Dendritic cell treated with granulocyte-macrophage colony-stimulating factor and Interleukin-4, amounts not matched to agents 40 ng/mL and 50 ng/mL, for 4 days (primary cell): ENCODE measurements at regions of chr2 and their contacts with region 1.

Region 1: DNA sequence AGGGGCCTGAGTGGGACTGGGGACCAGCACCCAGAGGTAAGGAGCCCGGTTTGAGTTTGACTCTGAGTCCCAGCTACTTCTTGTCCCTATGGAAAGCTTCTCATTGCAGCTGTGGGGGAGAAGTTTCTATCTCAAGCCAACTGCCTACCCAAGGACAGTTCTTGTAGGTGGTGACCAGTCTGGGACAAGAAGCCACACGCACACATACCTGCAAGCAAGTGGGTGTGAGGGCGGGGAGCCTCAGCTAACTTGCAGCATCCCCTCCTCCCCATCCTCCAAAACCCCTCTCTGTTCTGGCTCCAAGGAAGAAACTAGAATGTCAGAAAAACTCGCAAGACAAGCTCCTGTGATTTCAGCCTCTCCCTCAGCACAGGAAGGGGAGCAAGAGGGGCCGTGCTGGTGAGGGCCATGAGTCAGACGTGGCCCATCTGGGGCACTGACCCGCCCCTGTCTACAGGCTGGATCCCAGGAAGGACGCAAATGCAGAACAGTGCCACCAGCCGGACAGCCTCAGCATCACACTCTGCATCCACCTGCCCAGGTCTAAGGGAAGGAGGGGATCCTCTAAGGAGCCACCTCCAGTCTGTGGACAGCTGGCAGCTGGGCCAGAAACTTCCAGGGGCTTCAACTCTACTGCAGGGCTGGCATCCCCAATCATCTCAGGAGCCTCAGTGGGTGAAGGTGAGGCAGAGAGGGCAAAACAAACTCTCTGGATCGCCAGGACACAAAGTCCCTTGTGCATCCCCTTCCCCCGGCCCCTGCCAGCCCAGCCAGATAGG is 103.4 kb downstream of the TNS1 start:
- H3K4me3 Mint-ChIP-seq: no peak overlapping the region
- H3K27ac Mint-ChIP-seq: peak overlapping the region; percentile 38
- H3K4me1 Mint-ChIP-seq: peaks cover 62% of the 10 kb centered on the region
- H3K27me3 Mint-ChIP-seq: peaks cover 7% of the 10 kb centered on the region

Region 2: GRCh38 chr2:217816396-217816869 is 83.0 kb before region 1 on chr2:
- intact Hi-C with region 1: no loop called
- H3K4me3 Mint-ChIP-seq: no peak overlapping the region
- H3K27ac Mint-ChIP-seq: peak overlapping the region; percentile 41
- H3K4me1 Mint-ChIP-seq: peaks cover 33% of the 10 kb centered on the region
- H3K27me3 Mint-ChIP-seq: no peaks in the 10 kb centered on the region

Region 3: DNA sequence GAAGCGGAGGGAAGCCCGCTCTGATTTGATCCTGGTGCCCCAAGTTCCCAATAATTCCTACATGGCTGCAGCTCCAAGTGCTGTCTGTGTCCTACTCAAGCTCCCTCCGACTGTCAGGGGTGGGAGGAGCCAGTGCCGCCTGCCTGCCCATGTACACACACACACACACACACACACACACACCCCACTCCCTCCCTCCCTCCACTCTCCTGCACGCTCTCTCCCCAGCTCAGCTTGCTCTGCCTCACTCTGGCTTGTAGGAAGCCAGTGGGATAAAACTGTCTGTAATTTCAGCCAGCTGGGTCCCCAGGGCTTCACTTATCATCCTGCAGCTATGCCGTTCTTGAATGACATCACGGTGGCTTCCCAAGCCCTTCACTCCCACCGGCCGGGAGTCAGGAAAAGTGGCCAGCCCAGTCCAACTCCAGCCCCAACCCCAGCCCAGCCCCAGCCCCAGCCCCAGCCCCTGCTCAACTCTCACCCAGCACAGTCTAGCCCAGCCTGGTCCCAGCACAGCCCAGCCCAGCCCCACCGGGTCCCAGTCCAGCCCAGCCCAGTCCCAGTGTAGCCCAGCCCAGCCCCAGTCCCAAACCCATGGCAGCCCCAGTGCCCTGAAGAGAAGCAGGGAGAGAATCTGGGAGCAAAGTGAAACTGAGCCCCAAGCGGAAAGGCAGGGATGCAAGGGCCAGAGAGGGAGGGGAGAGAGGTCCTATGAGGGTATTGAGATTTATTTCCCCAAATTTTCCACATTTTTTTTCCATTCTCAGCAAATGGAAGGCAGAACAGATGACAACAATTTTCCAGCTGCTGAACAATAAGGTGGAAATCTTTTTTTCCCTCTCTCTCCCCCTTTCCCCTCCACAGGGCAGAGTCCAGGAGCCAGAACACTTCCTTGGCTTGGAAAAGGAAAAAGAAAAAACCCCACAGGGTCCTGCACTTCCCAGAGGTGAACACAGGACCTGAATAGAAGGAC is 40.6 kb before region 1 on chr2:
- intact Hi-C with region 1: no loop called
- H3K4me3 Mint-ChIP-seq: no peak overlapping the region
- H3K27ac Mint-ChIP-seq: no peak overlapping the region
- H3K4me1 Mint-ChIP-seq: peaks cover 18% of the 10 kb centered on the region
- H3K27me3 Mint-ChIP-seq: peaks cover 41% of the 10 kb centered on the region

Region 4: DNA sequence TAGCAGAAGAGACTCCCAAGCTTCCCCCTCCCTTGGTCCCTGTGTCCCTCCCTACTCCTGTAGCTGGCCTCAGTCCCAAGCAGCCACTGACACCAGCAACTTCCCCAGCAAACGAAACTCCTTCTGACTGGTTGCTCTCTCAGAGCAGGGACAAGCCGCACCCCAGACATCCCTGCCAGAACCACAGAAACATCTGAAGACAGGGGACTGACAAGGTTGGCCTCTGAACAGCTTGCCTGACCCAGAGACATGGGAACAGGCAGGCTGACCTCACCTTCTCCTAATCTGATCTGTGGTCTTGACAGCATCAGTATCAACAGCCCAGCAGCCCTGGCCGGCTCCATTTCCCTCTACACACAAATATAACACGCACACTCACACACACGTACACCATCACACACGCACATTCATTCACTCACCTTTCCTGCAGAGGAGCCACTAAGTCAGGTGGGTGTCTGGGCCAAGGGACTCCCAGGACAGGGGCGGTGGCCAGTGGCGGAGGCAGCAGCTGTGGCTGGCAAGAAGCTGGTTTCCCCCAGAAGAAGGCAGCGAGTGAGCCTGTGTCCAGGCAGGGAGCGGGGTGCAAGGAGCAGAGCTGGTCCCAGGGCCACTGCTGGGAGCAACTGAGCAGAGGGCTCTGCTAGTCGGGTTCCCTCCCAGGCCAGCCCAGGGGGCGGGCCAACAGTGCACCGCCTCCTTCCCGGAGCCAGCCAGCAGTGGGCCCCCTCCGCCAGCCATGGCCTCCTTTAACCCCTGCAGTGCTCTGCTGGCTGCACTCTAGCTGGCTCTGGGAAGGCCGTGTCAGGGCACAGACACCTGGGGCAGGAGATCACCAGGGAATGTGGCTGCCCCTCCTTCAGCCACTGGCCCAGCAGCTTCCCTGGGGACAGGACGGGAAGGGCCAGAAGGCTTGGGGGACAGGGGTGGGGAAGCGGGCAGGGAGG is 44.3 kb after region 1 on chr2:
- intact Hi-C with region 1: loop called (anchors 5 kb)
- H3K4me3 Mint-ChIP-seq: peak overlapping the region; percentile 71
- H3K27ac Mint-ChIP-seq: peak overlapping the region; percentile 66
- H3K4me1 Mint-ChIP-seq: peaks cover 53% of the 10 kb centered on the region
- H3K27me3 Mint-ChIP-seq: peaks cover 43% of the 10 kb centered on the region

Region 5: DNA sequence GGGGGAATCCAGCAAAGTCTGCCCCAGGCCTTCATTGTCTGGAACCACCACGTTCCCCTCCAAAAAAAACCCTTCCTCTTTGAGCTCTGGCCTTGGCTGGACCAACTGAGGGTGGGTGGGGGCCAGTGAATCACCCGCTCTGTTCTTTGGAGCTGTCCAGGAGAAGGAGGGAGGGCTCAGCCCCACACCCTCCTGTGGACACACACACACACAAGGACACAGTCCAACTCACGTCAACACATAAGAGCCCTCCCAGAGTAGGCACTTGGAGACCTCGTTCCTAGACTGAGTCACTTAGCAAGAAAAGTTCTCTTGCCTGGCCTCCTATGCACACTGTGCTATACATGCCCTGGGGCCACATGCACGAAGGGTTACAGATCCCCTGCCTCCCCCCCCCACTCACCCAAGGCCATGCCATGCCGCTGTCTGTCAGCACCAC is 104.6 kb after region 1 on chr2:
- intact Hi-C with region 1: no loop called
- H3K4me3 Mint-ChIP-seq: no peak overlapping the region
- H3K27ac Mint-ChIP-seq: peak overlapping the region; percentile 47
- H3K4me1 Mint-ChIP-seq: peaks cover 62% of the 10 kb centered on the region
- H3K27me3 Mint-ChIP-seq: peaks cover 11% of the 10 kb centered on the region